ENCODE measurements at regions of chr16 and their contacts with region 1.

Region 1: DNA sequence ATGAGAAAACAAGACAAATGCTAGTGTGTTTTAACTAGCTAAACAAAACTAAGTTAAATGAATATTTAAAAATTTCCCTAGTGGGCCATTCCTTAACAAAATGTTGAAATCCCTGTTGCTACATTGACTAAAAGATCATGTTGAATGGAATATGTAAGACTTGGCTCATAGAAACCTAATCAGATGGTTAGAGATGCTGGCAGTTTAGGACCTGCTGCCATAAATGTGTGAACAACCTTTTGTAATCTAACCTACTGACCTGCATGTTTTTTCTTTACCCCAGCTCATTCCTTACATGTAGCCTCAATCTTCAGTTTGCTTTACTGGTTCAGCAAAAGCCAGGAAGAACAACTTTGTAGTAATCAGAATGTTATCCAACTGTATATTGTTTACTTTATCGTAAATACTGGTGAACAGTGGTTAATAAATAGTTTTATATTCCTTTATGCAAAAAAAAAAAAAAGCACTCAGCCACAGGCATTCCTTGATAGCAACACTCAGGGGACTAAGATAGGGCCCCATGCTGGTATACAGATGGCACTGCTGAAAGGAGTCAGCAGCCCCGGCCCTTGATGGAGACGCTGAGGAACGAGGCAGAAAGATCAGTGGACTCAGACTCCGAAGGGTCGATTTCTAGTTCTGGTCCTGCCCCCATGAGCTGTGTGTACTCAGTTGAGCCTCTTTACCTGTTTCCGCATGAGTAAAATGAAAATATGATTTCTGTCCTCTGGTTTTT is 78.2 kb downstream of the MARF1 start:
- DNase-seq: no peak
- ATAC-seq: no peak
- H3K4me3 ChIP-seq: no peak overlapping the region
- H3K27ac ChIP-seq: no peak overlapping the region
- H3K4me1 ChIP-seq: no peaks in the 10 kb centered on the region
- H3K27me3 ChIP-seq: no peaks in the 10 kb centered on the region

Region 2: GRCh38 chr16:15631730-15632409 is 67.1 kb after region 1 on chr16:
- intact Hi-C with region 1: loop called in 1 of 4 experiments (anchors 5 kb)
- DNase-seq: no peak
- ATAC-seq: no peak
- H3K4me3 ChIP-seq: no peak overlapping the region
- H3K27ac ChIP-seq: no peak overlapping the region
- H3K4me1 ChIP-seq: no peaks in the 10 kb centered on the region
- H3K27me3 ChIP-seq: no peaks in the 10 kb centered on the region